ENCODE measurements at regions of chr4 and their contacts with region 1.

Region 1: GRCh38 chr4:98995183-98996055 is at the start of gene METAP1:
- DNase-seq: peak; percentile 91 to 98 (median 93)
- ATAC-seq: peak; percentile 90
- H3K4me3 ChIP-seq: peak within 1 kb of the TSS; percentile 99
- H3K27ac ChIP-seq: peak within 1 kb of the TSS; percentile 97
- H3K4me1 ChIP-seq: peaks cover 4 to 8% of the 10 kb centered on the region in 2 experiments; a peak in 4 of 5 replicates
- H3K27me3 ChIP-seq: no peaks in the 10 kb centered on the region
- CTCF ChIP-seq: peak; percentile 85 to 99 (median 98)
- EP300 ChIP-seq: peak; percentile 51; the same call in 1 of the 2 replicates
- POLR2A ChIP-seq: peak; percentile 95
- RAD21 ChIP-seq: peak; percentile 91 to 96
- polyA plus RNA-seq, gene METAP1: 31.4 to 48.0 TPM

Region 2: DNA sequence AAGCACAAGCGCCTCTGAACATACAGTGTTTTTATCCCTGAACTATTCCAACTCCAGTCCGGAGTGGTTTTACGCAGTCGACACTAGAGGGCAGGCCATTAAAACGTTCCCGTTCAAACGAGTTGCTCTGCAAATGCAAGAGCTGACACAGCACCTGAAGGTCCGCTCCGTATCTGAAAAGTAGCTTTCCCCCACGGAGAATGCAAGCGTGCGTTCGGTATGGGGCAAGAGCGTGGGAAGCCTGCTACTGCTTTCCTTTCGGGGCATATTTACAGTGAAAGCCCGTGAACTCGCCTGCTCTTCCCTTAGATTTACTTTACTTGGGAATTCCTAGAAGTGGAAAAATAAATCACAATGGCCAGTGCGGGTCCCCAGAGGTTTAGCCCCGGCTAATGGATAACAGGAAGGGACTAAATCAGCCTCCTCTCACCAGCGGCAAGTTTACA is 527.8 kb before region 1 on chr4:
- CTCF ChIA-PET with region 1: no interaction called
- POLR2A ChIA-PET with region 1: no interaction called
- in situ Hi-C with region 1: no loop called
- intact Hi-C with region 1: loop called (anchors 1 kb)
- DNase-seq: peak; percentile 56 to 85 (median 62)
- ATAC-seq: peak; percentile 97
- H3K4me3 ChIP-seq: peak overlapping the region; percentile 11; the same call in 1 of the 2 replicates
- H3K27ac ChIP-seq: no peak overlapping the region
- H3K4me1 ChIP-seq: no peaks in the 10 kb centered on the region; a peak in 3 of 5 replicates
- H3K27me3 ChIP-seq: no peaks in the 10 kb centered on the region
- CTCF ChIP-seq: peak; percentile 75 to 83 (median 83)
- EP300 ChIP-seq: no peak
- POLR2A ChIP-seq: no peak
- RAD21 ChIP-seq: peak; percentile 86 to 87

Region 3: DNA sequence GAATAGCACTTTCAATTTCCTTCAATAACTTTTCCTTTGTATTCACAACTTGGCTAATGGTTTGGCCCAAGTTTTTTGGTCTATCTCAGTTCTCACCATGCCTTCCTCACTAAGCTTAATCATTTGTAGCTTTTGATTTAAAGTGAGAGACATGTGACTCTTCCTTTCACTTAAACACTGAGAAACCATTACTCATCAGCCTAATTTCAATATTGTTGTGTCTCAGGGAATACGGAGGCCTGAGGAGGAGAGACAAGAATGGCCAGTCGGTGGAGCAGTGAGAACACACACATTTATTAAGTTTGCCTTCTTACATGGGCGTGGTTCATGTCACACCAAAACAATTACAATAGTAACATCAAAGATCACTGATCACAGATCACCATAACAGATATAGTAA is 393.7 kb before region 1 on chr4:
- CTCF ChIA-PET with region 1: no interaction called
- POLR2A ChIA-PET with region 1: no interaction called
- in situ Hi-C with region 1: no loop called
- intact Hi-C with region 1: no loop called
- DNase-seq: no peak
- ATAC-seq: no peak
- H3K4me3 ChIP-seq: no peak overlapping the region
- H3K27ac ChIP-seq: no peak overlapping the region
- H3K4me1 ChIP-seq: no peaks in the 10 kb centered on the region; a peak in 1 of 5 replicates
- H3K27me3 ChIP-seq: no peaks in the 10 kb centered on the region
- CTCF ChIP-seq: no peak
- EP300 ChIP-seq: no peak
- POLR2A ChIP-seq: no peak
- RAD21 ChIP-seq: no peak

Region 4: GRCh38 chr4:98658287-98659105 is 336.9 kb before region 1 on chr4 and contains the start of gene TSPAN5:
- CTCF ChIA-PET with region 1: no interaction called
- POLR2A ChIA-PET with region 1: no interaction called
- in situ Hi-C with region 1: no loop called
- intact Hi-C with region 1: no loop called
- DNase-seq: peak; percentile 61 to 80 (median 76)
- ATAC-seq: peak; percentile 93
- H3K4me3 ChIP-seq: peak within 1 kb of the TSS; percentile 48
- H3K27ac ChIP-seq: no peak within 1 kb of the TSS
- H3K4me1 ChIP-seq: peaks cover 8 to 16% of the 10 kb centered on the region in 2 experiments
- H3K27me3 ChIP-seq: peaks cover 24 to 39% of the 10 kb centered on the region in 2 experiments
- CTCF ChIP-seq: no peak
- EP300 ChIP-seq: no peak
- POLR2A ChIP-seq: no peak
- RAD21 ChIP-seq: no peak
- polyA plus RNA-seq, gene TSPAN5: 0.59 to 0.73 TPM

Region 5: GRCh38 chr4:98786866-98787265 is 208.6 kb before region 1 on chr4:
- CTCF ChIA-PET with region 1: no interaction called
- POLR2A ChIA-PET with region 1: interaction called, 3 read pairs
- in situ Hi-C with region 1: no loop called
- intact Hi-C with region 1: loop called (anchors 1 kb)
- DNase-seq: peak in 2 of 4 experiments; percentile 33 to 54
- ATAC-seq: peak; percentile 91
- H3K4me3 ChIP-seq: no peak overlapping the region
- H3K27ac ChIP-seq: no peak overlapping the region
- H3K4me1 ChIP-seq: 0 out of 5 replicates have a peak, but pooled peaks cover 0 to 4% of the 10 kb centered on the region in 2 experiments
- H3K27me3 ChIP-seq: peaks cover 0 to 5% of the 10 kb centered on the region in 2 experiments; a peak in 1 of 5 replicates
- CTCF ChIP-seq: peak; percentile 38 to 62 (median 53); a peak in 5 of 6 replicates
- EP300 ChIP-seq: no peak
- POLR2A ChIP-seq: no peak
- RAD21 ChIP-seq: peak; percentile 28 to 66; a peak in 3 of 4 replicates

Region 6: GRCh38 chr4:98939892-98940298 is 55.5 kb before region 1 on chr4:
- CTCF ChIA-PET with region 1: no interaction called
- POLR2A ChIA-PET with region 1: no interaction called
- in situ Hi-C with region 1: no loop called
- intact Hi-C with region 1: loop called (anchors 1 kb)
- DNase-seq: peak; percentile 34 to 73 (median 45)
- ATAC-seq: peak; percentile 88
- H3K4me3 ChIP-seq: no peak overlapping the region
- H3K27ac ChIP-seq: no peak overlapping the region
- H3K4me1 ChIP-seq: no peaks in the 10 kb centered on the region
- H3K27me3 ChIP-seq: no peaks in the 10 kb centered on the region
- CTCF ChIP-seq: peak; percentile 63 to 82 (median 80); a peak in 5 of 6 replicates
- EP300 ChIP-seq: no peak
- POLR2A ChIP-seq: no peak
- RAD21 ChIP-seq: peak; percentile 48 to 62

Region 7: GRCh38 chr4:99405433-99406115 is 410.2 kb after region 1 on chr4:
- CTCF ChIA-PET with region 1: interaction called, 3 read pairs
- POLR2A ChIA-PET with region 1: no interaction called
- in situ Hi-C with region 1: no loop called
- intact Hi-C with region 1: loop called (anchors 1 kb)
- DNase-seq: peak; percentile 29 to 71 (median 54)
- ATAC-seq: peak; percentile 92
- H3K4me3 ChIP-seq: no peak overlapping the region
- H3K27ac ChIP-seq: no peak overlapping the region
- H3K4me1 ChIP-seq: no peaks in the 10 kb centered on the region
- H3K27me3 ChIP-seq: no peaks in the 10 kb centered on the region
- CTCF ChIP-seq: peak; percentile 73 to 88 (median 82)
- EP300 ChIP-seq: no peak
- POLR2A ChIP-seq: no peak
- RAD21 ChIP-seq: peak; percentile 90 to 93